ENCODE measurements at regions of chr6 and their contacts with region 1.

Region 1: GRCh38 chr6:20291764-20292580 is 79.7 kb upstream of the MBOAT1 start:
- DNase-seq: peak; percentile 84
- H3K4me3 ChIP-seq: no peak overlapping the region
- H3K27ac ChIP-seq: no peak overlapping the region
- H3K4me1 ChIP-seq: peaks cover 0 to 6% (median 0%) of the 10 kb centered on the region in 4 donors
- H3K27me3 ChIP-seq: no peaks in the 10 kb centered on the region
- CTCF ChIP-seq: peak; percentile 75 to 95 (median 88)
- EP300 ChIP-seq: no peak
- POLR2A ChIP-seq: no peak

Region 2: DNA sequence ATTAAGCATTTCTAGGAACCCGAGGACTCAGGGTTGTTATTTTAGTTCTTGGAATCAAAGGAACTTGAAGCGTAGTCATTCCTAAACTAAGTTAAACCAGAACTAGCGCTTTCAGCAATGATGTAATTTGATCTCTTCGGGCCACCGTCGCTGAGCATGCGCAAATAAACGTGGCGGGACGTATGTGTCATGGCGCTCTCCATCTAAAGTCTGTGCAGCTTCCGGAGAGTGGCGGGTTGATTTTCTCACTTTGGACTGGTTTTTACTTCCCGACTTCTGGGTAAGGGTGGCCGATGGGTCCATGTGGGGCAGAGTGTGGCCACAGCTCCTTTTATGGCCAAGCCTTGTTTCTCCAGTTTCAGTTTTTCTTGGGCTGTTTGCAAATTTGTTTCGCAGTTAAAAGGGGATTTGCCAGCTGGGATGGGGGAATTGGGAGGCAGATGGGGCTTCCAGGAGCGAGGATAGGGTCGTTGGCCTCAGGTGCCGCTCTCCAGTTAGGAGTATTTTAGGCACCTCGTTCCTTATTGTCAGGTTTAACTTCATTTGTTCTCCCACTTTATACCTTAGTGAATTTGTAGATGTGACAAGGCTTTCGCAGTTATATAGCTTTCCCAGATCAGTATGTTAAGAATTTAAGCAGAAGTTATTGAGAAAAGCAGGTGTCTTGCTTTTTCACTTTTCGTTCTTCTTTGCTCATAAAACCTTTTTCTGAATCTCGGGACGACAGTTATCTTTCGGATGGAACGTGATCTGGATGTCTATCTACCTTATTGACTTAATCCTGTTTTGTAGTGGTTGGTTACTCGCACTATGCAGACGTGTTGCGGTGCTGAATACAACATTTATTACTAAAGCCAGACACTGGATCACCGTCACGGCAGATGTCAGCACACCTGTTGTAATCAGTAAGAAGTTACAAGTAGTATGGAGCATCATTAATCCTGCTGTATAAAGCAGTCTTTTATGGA is 242.6 kb after region 1 on chr6 and contains the start of gene CDKAL1:
- intact Hi-C with region 1: loop called (anchors 1 kb)
- DNase-seq: peak; percentile 95
- H3K4me3 ChIP-seq: peak within 1 kb of the TSS; percentile 72 to 79 (median 78)
- H3K27ac ChIP-seq: peak within 1 kb of the TSS; percentile 86 to 90 (median 88)
- H3K4me1 ChIP-seq: peaks cover 0 to 27% (median 15%) of the 10 kb centered on the region in 4 donors
- H3K27me3 ChIP-seq: no peaks in the 10 kb centered on the region
- CTCF ChIP-seq: no peak
- EP300 ChIP-seq: no peak
- POLR2A ChIP-seq: peak in 1 of 2 donors; percentile 20
- total RNA-seq, gene CDKAL1: 11.4 to 14.7 (median 13.6) TPM

Region 3: DNA sequence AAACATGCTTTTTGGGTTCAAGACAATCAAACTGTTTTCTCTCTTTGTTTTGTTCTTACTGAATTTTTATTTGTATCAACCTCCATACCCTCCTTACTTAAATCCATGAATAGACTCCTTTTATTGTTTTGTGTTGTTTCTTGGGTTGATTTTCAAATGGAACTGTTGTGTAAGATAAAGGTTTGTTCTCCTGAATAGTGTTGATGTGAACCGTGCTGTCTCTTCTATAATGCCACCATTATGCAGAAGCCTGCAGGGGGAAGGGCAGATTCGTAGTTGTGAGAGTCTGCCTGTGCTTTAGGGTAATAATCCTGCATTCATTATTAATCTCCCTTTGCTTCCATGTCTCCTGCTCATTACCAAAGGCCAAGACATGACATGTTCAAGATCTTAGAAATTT is 348.2 kb after region 1 on chr6:
- intact Hi-C with region 1: no loop called
- DNase-seq: no peak
- H3K4me3 ChIP-seq: no peak overlapping the region
- H3K27ac ChIP-seq: no peak overlapping the region
- H3K4me1 ChIP-seq: no peaks in the 10 kb centered on the region
- H3K27me3 ChIP-seq: no peaks in the 10 kb centered on the region
- CTCF ChIP-seq: no peak
- EP300 ChIP-seq: no peak
- POLR2A ChIP-seq: no peak

Measured in sigmoid colon (tissue), 7 donors.